HEK293 (cell line): ENCODE measurements at regions of chr1 and their contacts with region 1.

Region 1: GRCh38 chr1:84753516-84754385 is 63.5 kb upstream of the SSX2IP start:
- H3K4me3 ChIP-seq: no peak overlapping the region
- H3K27ac ChIP-seq: no peak overlapping the region
- H3K4me1 ChIP-seq: no peaks in the 10 kb centered on the region
- CTCF ChIP-seq: peak; percentile 91

Region 2: DNA sequence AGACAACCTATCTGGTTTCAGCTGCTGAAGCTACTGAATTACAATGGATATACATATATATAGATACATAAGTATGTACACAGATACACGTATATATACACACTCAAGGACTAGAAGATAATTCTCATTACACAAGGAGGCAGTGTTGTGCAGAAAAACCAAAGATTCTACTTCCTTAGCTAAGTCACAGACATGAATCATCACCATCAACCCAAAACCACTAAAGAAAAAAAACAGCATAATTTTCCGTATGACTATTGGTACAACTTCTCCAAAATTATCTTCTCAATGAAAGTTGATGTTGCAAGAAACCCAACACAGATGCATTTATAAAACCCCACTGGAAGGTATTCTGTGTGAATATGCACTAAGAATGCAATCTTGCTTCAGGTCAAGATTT is 311.5 kb before region 1 on chr1:
- CTCF ChIA-PET with region 1: interaction called, 29 read pairs
- POLR2A ChIA-PET with region 1: no interaction called
- H3K4me3 ChIP-seq: no peak overlapping the region
- H3K27ac ChIP-seq: no peak overlapping the region
- H3K4me1 ChIP-seq: no peaks in the 10 kb centered on the region
- CTCF ChIP-seq: no peak

Region 3: DNA sequence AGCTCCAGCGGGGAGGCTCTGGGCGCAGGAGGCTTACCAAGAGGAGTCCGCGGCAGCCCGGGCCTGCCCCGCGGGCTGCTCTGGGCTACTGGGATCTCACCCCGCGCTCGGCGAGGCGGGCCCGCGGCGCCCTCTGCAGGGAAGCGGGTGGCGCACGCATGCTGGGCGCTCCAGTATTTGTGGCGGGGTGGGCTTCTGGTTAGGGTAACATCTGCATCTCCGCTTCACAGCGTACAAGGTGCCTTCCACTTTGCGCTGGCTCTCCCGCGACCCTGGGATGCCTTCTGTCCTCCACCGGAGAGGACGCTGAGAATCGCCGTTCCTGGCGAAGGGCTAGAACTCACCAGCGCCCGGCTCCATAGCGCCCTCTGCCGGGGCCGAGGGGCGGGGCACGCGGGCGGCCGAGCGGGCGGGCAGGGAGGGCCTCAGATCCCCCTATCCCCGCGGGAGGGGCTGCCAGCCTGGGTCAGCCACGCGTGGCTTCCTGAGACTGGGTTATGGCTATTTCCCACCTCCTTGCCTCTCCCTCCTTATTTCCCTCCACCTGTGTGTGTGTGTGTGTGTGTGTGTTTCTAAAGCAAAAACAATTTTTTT is 132.9 kb before region 1 on chr1:
- CTCF ChIA-PET with region 1: interaction called, 13 read pairs
- POLR2A ChIA-PET with region 1: no interaction called
- H3K4me3 ChIP-seq: peak overlapping the region; percentile 67
- H3K27ac ChIP-seq: peak overlapping the region; percentile 71; the same call in 1 of the 2 replicates
- H3K4me1 ChIP-seq: peaks cover 2% of the 10 kb centered on the region; the same call in 1 of the 2 replicates
- CTCF ChIP-seq: peak; percentile 98

Region 4: GRCh38 chr1:84668185-84668584 is 85.6 kb before region 1 on chr1:
- CTCF ChIA-PET with region 1: interaction called, 21 read pairs
- POLR2A ChIA-PET with region 1: no interaction called
- H3K4me3 ChIP-seq: no peak overlapping the region
- H3K27ac ChIP-seq: no peak overlapping the region
- H3K4me1 ChIP-seq: peaks cover 8% of the 10 kb centered on the region; the same call in 1 of the 2 replicates
- CTCF ChIP-seq: no peak

Region 5: DNA sequence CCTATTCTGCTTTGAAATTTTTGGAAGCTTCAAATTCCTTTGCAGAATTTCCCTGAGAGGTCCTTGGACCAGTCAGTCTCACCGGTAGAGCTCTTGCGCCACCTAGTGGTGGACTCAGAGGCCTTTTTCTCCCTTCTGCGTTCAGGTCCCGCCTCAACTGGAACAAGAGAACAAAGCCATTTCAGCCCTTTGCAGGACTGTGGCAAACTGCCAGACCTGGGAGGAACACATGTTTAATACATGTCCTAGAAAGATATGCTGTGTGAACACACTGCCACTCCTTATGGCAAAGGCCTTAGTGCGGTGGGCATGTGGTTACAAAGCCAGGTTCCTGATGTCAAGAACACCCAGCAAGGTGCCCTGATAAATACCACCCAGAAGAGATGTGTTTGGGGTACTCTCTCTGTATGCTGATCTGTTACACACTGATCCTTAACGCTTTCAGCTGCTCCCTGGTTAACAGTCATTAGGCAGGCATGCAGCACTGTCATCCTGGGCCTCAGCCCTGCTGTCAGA is 18.7 kb after region 1 on chr1:
- CTCF ChIA-PET with region 1: interaction called, 57 read pairs
- POLR2A ChIA-PET with region 1: no interaction called
- H3K4me3 ChIP-seq: no peak overlapping the region
- H3K27ac ChIP-seq: no peak overlapping the region
- H3K4me1 ChIP-seq: no peaks in the 10 kb centered on the region
- CTCF ChIP-seq: peak; percentile 73

Region 6: GRCh38 chr1:84936116-84936810 is 182.5 kb after region 1 on chr1:
- CTCF ChIA-PET with region 1: interaction called, 19 read pairs
- POLR2A ChIA-PET with region 1: no interaction called
- H3K4me3 ChIP-seq: no peak overlapping the region
- H3K27ac ChIP-seq: no peak overlapping the region
- H3K4me1 ChIP-seq: no peaks in the 10 kb centered on the region
- CTCF ChIP-seq: peak; percentile 88